ENCODE measurements at regions of chr10 and their contacts with region 1.

Region 1: GRCh38 chr10:123132576-123133477 is 2.9 kb upstream of the HMX3 start:
- DNase-seq: peak; percentile 76
- ATAC-seq: peak; percentile 87
- H3K4me3 ChIP-seq: peak overlapping the region; percentile 16; the same call in 1 of the 2 replicates
- H3K27ac ChIP-seq: no peak overlapping the region
- H3K4me1 ChIP-seq: peaks cover 2% of the 10 kb centered on the region; the same call in 1 of the 2 replicates
- H3K27me3 ChIP-seq: peaks cover 70% of the 10 kb centered on the region
- CTCF ChIP-seq: peak; percentile 90
- POLR2A ChIP-seq: 0 out of 2 replicates have a peak, but pooled peaks have one; percentile 25
- RAD21 ChIP-seq: peak; percentile 86

Region 2: DNA sequence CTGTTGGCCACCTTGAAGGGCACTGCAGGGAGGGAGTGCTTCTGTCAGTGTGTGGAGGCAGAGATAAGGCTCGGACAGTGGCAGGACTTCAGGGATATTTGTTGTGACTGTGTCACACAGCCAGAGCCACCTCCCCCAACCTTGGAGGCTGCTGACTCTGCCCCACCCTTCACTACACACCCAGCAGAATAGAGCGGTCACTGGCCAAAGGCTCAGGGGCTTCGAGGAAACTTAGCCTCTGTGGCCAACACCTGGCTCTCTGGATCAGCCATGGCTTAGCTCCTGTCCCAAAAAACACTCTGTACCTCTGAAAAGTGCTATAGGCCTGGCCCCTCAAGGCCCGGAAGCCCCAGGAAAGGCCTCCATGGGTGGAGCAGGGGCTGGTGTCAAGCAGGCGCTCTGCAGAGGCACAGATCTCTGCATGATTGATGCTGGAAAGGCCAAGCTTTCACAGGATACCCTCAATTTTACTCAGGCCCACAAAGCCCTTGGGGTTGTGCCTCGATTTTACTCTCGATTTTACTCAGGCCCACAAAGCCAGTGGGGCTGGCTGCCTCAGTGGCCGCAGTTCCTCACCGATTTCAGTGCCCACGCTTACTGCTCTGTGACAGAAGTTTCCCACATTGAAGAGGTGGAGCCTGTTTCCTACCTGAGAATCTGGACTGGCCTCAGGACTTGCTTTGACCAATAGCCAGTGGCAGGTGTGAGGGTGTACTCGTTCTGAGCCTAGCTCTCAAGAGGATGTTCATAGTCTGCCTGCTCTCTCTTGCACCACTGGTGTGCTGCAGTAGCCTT is 420.1 kb after region 1 on chr10:
- CTCF ChIA-PET with region 1: no interaction called
- POLR2A ChIA-PET with region 1: no interaction called
- dilution Hi-C with region 1: no loop called
- in situ Hi-C with region 1: loop called (anchors 5 kb)
- intact Hi-C with region 1: no loop called
- DNase-seq: no peak
- ATAC-seq: no peak
- H3K4me3 ChIP-seq: no peak overlapping the region
- H3K27ac ChIP-seq: no peak overlapping the region
- H3K4me1 ChIP-seq: no peaks in the 10 kb centered on the region
- H3K27me3 ChIP-seq: no peaks in the 10 kb centered on the region
- CTCF ChIP-seq: no peak
- POLR2A ChIP-seq: no peak
- RAD21 ChIP-seq: no peak

Region 3: GRCh38 chr10:123559066-123559822 is 426.4 kb after region 1 on chr10:
- CTCF ChIA-PET with region 1: no interaction called
- POLR2A ChIA-PET with region 1: no interaction called
- dilution Hi-C with region 1: no loop called
- in situ Hi-C with region 1: loop called (anchors 5 kb)
- intact Hi-C with region 1: loop called (anchors 1 kb)
- DNase-seq: peak; percentile 31
- ATAC-seq: peak; percentile 98
- H3K4me3 ChIP-seq: no peak overlapping the region
- H3K27ac ChIP-seq: no peak overlapping the region
- H3K4me1 ChIP-seq: no peaks in the 10 kb centered on the region
- H3K27me3 ChIP-seq: no peaks in the 10 kb centered on the region
- CTCF ChIP-seq: peak; percentile 94
- POLR2A ChIP-seq: no peak; the same call in 1 of the 2 replicates
- RAD21 ChIP-seq: peak; percentile 94

Region 4: DNA sequence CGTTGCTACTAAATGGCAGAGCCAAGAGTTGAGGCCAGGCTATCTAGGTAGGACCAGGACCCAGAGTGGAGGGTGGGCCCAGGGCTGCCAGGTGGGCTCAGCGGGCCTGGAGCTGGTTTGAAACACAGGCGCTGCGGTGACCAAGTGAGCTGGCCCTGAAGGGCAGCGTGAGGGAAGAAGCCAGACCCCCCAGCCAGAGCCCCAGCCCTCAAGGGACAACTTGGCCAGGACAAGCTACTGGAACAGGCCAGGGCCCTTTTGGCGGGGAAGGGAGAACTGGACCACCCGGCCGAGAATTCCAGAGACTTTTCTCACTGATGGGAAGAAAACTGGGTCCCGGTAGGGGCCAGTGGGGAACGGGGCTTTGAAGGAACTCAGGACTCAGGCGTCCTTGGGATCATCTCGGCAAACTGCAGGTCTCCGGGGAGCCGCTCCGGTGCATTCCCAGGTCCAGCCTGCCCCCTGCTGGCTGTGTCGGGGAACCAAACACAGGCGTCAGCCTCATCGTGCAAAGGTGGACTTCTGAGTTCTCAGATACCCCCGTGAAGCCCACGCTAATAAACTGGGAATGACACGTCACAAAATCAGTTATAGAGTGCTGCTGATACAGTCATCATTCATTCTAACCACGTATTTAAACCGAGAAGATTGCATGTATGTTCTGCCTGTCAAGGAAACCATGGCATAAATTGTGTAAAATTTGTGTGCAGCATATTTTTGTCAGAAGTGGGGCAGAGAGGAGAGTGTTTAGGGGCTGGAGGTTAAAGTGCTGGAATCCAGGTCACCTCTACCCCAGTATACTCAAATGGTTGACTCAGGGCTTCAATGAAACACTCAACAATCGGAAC is 834.8 kb after region 1 on chr10:
- CTCF ChIA-PET with region 1: no interaction called
- POLR2A ChIA-PET with region 1: no interaction called
- dilution Hi-C with region 1: no loop called
- in situ Hi-C with region 1: loop called (anchors 10 kb)
- intact Hi-C with region 1: no loop called
- DNase-seq: peak; percentile 11
- ATAC-seq: peak; percentile 65
- H3K4me3 ChIP-seq: no peak overlapping the region
- H3K27ac ChIP-seq: no peak overlapping the region
- H3K4me1 ChIP-seq: no peaks in the 10 kb centered on the region
- H3K27me3 ChIP-seq: no peaks in the 10 kb centered on the region
- CTCF ChIP-seq: peak; percentile 53
- POLR2A ChIP-seq: no peak
- RAD21 ChIP-seq: peak; percentile 63

Region 5: GRCh38 chr10:124388823-124389612 is 1256.2 kb after region 1 on chr10:
- CTCF ChIA-PET with region 1: no interaction called
- POLR2A ChIA-PET with region 1: no interaction called
- dilution Hi-C with region 1: no loop called
- in situ Hi-C with region 1: loop called (anchors 25 kb)
- intact Hi-C with region 1: loop called (anchors 1 kb)
- DNase-seq: peak; percentile 71
- ATAC-seq: peak; percentile 99
- H3K4me3 ChIP-seq: peak overlapping the region; percentile 26; the same call in 1 of the 2 replicates
- H3K27ac ChIP-seq: no peak overlapping the region
- H3K4me1 ChIP-seq: no peaks in the 10 kb centered on the region
- H3K27me3 ChIP-seq: no peaks in the 10 kb centered on the region; the same call in 1 of the 2 replicates
- CTCF ChIP-seq: peak; percentile 97
- POLR2A ChIP-seq: no peak
- RAD21 ChIP-seq: peak; percentile 92